Spleen (tissue), 13 donors: ENCODE measurements at regions of chr11 and their contacts with region 1.

Region 1: DNA sequence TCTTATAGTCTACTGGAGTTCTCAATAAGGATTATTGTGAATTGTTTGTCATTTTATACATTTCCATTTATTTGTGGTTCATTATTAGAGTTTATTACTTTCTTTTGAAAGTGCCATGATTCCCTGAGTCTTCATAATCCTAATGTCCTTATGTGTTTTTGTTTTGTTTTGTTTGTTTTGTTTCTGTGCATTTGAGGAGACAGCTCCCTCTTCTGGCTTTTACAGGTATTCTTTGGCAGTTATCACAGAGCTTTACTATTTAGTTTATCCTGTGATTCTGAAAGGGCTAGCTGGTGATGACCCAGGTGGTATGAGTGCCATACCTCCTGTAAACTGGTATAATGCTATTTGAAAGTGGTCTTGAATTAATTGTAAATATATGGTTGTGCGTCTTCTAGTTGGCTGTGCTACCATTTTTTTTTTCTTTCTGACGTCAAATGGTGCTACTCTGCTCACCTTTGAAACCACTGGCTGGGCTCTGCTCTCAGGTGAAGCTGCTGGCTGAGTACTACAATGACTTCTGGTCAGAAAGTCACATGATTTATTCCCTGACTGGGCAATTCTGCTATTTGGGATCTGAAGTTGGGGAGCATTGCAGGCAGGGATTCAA is 751.2 kb downstream of the JRKL start:
- DNase-seq: no peak
- H3K4me3 ChIP-seq: no peak overlapping the region
- H3K27ac ChIP-seq: no peak overlapping the region
- H3K4me1 ChIP-seq: no peaks in the 10 kb centered on the region
- H3K27me3 ChIP-seq: no peaks in the 10 kb centered on the region
- CTCF ChIP-seq: peak in 7 of 11 experiments; percentile 10 to 49 (median 30)
- POLR2A ChIP-seq: no peak

Region 2: GRCh38 chr11:96464700-96465307 is 676.2 kb before region 1 on chr11:
- intact Hi-C with region 1: loop called (anchors 10 kb)
- DNase-seq: no peak
- H3K4me3 ChIP-seq: peak overlapping the region in 1 of 8 donors; percentile 59
- H3K27ac ChIP-seq: no peak overlapping the region
- H3K4me1 ChIP-seq: peaks cover 0 to 18% (median 8%) of the 10 kb centered on the region in 6 donors
- H3K27me3 ChIP-seq: peaks cover 0 to 3% (median 0%) of the 10 kb centered on the region in 7 donors
- CTCF ChIP-seq: peak in 10 of 11 experiments; percentile 36 to 83 (median 66)
- POLR2A ChIP-seq: no peak

Region 3: GRCh38 chr11:97079244-97079643 is 61.7 kb before region 1 on chr11:
- intact Hi-C with region 1: no loop called
- DNase-seq: no peak
- H3K4me3 ChIP-seq: no peak overlapping the region
- H3K27ac ChIP-seq: no peak overlapping the region
- H3K4me1 ChIP-seq: no peaks in the 10 kb centered on the region
- H3K27me3 ChIP-seq: no peaks in the 10 kb centered on the region
- CTCF ChIP-seq: no peak
- POLR2A ChIP-seq: no peak

Region 4: DNA sequence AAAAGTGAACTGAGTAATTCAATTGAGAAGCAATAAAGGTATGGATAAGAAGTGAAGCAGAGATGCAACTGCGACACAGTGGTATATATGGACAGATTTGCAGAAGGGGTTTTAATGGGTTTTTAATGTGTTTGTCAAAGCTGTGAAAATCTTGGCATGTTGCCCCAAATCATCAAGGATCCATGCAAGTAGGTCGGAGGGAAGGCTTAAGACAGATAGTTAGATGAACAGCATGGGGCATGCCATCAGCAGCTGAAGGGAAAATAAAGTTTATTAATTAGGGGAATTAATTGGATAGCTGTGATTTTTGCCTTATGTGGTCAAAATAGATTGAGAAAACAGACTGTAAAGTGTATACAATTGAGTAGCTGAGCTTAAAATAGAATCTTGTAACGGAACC is 88.9 kb after region 1 on chr11:
- intact Hi-C with region 1: no loop called
- DNase-seq: no peak
- H3K4me3 ChIP-seq: no peak overlapping the region
- H3K27ac ChIP-seq: no peak overlapping the region
- H3K4me1 ChIP-seq: no peaks in the 10 kb centered on the region
- H3K27me3 ChIP-seq: no peaks in the 10 kb centered on the region
- CTCF ChIP-seq: no peak
- POLR2A ChIP-seq: no peak